AG04449 (cell line): ENCODE measurements at regions of chr11 and their contacts with region 1.

Region 1: DNA sequence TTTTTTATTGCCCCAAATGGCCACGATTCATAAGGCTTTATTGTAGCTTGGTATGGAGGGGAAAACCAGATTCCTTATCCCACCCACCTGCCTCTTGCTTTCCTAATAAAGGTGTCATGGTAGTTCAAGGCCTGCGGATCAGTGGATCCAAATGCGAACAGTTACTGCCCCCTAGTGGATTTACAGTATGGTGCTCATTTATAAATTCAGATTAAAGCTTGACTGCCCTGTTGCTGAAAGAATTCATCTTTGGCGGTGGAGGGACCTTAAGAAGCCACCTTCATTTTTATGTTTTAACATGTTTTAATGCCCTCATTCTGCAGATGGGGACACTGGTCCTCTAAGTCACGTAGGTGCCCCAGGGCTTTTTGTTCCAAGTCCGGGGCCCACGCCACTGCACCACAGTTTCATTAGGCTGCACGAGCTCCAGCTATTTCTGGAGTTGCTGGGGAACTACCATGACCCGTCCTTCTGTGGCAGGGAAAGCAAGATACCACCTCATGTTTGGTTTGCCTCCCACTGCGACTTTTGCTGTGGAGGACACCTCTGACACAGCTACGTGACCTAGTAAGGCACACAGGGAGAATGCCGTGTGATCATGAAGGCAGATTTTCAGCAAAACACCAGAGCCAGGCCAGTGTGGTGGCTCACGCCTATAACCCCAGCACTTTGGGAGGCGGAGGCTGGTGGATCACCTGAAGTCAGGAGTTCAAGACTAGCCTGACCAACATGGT is 15.6 kb upstream of the INCENP start:
- DNase-seq: no peak
- H3K4me3 ChIP-seq: no peak overlapping the region
- CTCF ChIP-seq: peak; percentile 53

Region 2: DNA sequence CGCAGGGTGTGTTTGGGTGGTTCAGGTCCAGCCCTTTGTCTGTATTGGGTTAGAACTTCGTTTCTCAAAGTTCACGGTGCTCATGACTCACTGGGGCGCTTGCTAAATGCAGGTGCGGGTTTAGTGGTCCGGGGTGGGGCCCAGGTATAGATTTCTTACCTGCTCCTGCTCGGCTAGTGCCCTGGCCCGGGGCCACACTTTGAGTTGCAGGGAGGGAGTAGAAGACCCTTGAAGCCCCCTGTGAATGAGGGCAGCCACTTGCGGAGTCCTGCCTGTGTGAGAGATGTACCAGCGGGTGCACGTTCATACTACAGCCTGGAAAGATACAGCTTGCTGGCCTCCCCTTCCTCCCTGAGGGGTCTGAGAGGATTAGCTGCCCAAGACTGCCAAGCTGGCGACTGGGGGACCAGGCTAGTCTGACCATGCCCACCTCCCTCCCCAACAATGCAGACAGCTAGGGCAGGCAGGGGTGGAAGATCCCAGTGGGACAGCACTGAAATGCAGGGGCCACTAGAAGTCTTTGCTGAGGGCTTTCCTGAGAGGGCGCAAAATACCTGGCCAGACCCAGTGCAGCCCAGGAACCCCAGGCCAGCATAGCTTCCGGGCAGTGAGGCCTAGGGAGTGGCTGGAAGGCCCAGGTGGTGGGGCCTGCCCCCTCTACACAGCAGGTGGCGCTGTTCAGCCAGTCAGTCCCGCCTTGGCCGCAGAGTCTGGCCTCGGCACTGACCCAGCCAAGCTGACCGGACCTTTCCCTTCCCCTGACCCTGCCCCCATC is 360.8 kb before region 1 on chr11:
- CTCF ChIA-PET with region 1: interaction called, 73 read pairs
- POLR2A ChIA-PET with region 1: no interaction called
- DNase-seq: no peak
- H3K4me3 ChIP-seq: no peak overlapping the region
- CTCF ChIP-seq: peak; percentile 97

Region 3: DNA sequence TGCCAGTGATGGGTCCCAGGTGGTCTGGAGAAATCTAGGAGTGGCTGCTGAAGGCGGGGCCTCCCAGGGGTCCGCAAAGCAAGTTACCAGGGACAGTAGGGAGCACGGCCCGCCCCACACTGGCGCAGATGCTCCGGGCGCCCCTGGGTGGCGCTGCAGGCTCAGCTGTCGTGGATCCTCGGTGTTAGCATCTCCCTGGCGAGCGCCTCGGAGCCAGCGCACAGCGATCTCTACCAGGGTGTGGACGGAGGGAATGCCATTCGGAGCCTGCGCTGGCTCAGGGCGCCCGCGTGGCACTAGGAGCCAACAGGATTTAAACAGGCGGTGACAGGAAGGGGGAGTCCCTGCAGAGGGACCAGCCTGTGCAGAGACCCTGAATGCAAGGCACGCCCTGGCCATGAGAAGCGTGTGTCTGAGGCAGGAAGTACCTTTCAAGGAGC is 237.0 kb before region 1 on chr11:
- CTCF ChIA-PET with region 1: interaction called, 183 read pairs
- POLR2A ChIA-PET with region 1: no interaction called
- DNase-seq: peak; percentile 12
- H3K4me3 ChIP-seq: peak overlapping the region; percentile 21
- CTCF ChIP-seq: peak; percentile 97

Region 4: DNA sequence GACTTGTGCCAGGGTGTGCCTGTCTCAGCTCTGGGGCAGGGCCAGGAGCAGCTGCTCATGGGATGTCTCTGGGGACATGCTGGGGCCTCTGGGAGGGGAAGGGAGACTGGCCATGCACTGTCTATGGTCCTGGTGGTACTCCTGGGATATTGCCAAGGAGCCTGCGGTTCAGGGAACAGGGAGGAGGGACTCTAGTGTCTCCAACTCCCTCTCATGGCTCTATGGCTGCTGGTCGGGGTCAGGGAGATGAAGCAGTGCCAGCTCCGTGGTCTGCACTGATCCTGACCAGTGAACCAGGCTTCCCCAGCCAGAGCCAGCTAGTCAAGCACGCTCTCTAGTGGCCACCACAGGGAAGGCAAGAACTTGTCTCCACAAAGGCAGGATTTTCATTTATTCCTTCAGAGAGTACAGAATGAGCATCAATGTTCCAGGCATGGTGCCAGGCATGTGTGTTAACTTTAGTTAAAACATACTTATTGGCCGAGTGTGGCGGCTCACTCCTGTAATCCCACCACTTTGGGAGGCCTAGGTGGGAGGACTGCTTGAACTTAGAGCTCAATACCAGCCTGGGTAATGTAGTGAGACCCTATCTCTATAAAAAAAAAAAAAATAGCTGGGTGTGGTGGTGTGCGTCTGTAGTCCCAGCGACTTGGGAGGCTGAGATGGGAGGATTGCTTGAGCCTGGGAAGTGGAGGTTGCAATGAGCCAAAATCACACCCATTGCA is 160.5 kb before region 1 on chr11:
- CTCF ChIA-PET with region 1: interaction called, 109 read pairs
- POLR2A ChIA-PET with region 1: interaction called, 3 read pairs
- DNase-seq: no peak
- H3K4me3 ChIP-seq: no peak overlapping the region
- CTCF ChIP-seq: peak; percentile 94

Region 5: DNA sequence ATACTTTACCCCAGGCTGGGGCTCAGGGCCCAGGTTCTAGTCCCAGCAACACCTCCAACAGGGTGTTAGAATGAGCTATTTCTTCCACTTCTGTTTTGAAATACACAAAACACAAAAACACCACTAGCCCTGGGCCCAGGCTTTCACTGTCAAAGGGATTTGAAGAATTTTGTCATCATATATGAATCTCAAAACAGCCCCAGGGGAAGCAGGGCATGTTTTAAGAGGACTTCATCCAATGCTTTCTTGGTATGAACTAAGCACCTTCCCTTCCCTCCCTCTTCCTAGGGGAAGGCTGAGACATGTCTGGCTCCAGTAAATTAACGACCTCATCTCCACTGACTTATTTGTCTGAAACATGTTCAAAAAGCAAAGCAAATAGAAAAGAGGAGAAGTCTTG is 60.1 kb before region 1 on chr11:
- CTCF ChIA-PET with region 1: interaction called, 14 read pairs
- POLR2A ChIA-PET with region 1: no interaction called
- DNase-seq: no peak
- H3K4me3 ChIP-seq: no peak overlapping the region
- CTCF ChIP-seq: no peak

Region 6: DNA sequence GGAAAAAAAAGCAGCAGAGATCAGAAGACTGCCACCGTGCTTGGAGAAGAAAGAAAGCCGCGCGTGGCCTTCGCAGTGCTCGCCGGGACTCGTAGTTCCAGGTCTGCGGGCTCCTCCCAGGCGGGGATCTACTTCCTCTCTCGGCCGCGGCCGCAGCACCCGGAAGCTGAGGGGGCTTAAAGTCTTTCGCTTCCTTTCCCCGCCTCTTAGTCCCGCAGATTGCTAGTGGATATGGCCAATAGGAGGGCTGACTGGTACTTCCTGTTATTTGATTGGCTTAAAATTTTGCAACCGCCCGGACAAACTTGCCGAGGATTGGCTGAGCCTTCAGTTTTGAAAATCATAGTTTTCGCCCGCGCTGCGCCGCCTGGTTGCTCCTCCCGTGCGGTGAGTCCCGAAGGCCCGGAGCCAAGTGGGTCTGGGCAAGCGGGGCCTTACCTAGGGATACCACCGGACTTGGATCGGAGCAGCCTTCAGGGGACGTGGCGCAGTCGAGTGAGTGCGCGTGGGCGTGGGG is 15.5 kb after region 1 on chr11 and contains the start of gene INCENP:
- CTCF ChIA-PET with region 1: interaction called, 45 read pairs
- POLR2A ChIA-PET with region 1: no interaction called
- DNase-seq: peak; percentile 94
- H3K4me3 ChIP-seq: peak within 1 kb of the TSS; percentile 100
- CTCF ChIP-seq: no peak